Adrenal gland (tissue), 19 donors: ENCODE measurements at regions of chr18 and their contacts with region 1.

Region 1: GRCh38 chr18:9614401-9615279 is at the start of gene PPP4R1:
- DNase-seq: peak; percentile 74 to 85 (median 81)
- H3K4me3 ChIP-seq: peak within 1 kb of the TSS; percentile 46 to 95 (median 82)
- H3K27ac ChIP-seq: peak within 1 kb of the TSS; percentile 88 to 97 (median 94)
- H3K4me1 ChIP-seq: peaks cover 11 to 31% of the 10 kb centered on the region in 2 donors
- H3K27me3 ChIP-seq: no peaks in the 10 kb centered on the region
- CTCF ChIP-seq: peak in 1 of 6 experiments; percentile 11
- POLR2A ChIP-seq: peak in 1 of 2 donors; percentile 54
- total RNA-seq, gene PPP4R1: 22.8 to 104 (median 62.2) TPM

Region 2: DNA sequence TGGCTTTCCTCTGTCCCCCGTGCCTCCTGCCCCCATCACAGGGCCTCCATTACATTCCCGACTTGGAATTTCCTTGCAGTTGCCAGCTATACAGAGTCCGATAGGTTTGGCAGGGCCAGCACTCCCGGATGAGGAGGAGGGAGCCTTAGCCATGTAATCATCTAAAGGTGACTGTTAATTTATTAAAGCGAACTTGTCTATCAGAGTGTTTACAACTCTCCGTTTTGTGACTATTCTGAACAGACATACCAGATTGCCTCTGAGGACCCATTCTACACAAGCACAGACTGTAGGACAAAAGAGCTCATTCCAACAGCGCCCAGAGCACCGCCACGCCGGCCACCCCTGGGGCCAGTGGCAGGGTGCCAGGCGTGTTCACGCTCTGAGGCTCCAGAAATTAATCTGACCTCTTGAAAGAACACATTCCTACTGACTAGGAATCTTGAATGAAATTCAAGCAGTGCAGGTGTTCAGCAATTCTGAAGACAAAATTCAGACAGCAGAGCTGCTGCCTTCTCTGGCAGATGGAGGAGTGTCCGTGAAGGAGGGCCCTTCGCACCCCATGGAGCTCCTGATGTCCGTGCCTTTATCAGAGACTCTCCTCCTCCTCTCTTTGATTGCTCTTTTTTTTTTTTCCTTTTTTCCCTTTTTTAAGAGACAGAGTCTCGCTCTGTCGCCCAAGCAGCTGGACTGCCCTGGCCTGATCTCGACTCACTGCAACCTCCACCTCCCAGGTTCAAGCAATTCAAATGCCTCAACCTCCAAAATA is 197.4 kb before region 1 on chr18:
- intact Hi-C with region 1: no loop called
- DNase-seq: no peak
- H3K4me3 ChIP-seq: peak overlapping the region in 1 of 4 donors; percentile 26
- H3K27ac ChIP-seq: peak overlapping the region in 1 of 5 donors; percentile 10
- H3K4me1 ChIP-seq: no peaks in the 10 kb centered on the region
- H3K27me3 ChIP-seq: no peaks in the 10 kb centered on the region
- CTCF ChIP-seq: no peak
- POLR2A ChIP-seq: no peak

Region 3: GRCh38 chr18:9708057-9708433 is 93.4 kb after region 1 on chr18 and contains the start of gene RAB31:
- intact Hi-C with region 1: no loop called
- DNase-seq: peak; percentile 82 to 90 (median 87)
- H3K4me3 ChIP-seq: peak within 1 kb of the TSS; percentile 38 to 94 (median 84)
- H3K27ac ChIP-seq: peak within 1 kb of the TSS; percentile 62 to 98 (median 98)
- H3K4me1 ChIP-seq: peaks cover 30 to 56% of the 10 kb centered on the region in 2 donors
- H3K27me3 ChIP-seq: no peaks in the 10 kb centered on the region
- CTCF ChIP-seq: no peak
- POLR2A ChIP-seq: peak; percentile 87 to 93
- total RNA-seq, gene RAB31: 79.2 to 365 (median 143) TPM

Region 4: DNA sequence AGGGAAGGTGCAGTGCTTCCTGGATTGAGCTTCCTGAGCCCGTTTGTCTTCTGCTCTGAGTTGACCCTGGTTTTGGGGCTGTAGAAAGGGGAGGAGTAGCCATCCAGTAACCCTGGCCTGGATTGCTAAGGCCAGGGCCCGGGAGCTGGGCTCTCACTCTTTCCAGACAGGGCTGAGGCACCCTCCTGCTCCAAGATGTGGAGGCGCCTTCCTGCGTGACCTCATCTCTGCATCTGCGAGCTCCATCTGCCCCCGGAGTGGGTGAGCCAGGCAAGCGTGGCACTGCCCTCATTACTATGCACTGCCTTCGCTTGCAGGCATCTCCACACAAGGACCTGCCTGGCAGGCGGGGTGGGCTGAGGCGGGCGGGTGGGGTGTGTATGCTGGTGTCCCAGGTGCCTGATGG is 151.4 kb after region 1 on chr18:
- intact Hi-C with region 1: loop called in 1 of 2 experiments (anchors 10 kb)
- DNase-seq: peak in 5 of 7 donors; percentile 56 to 73 (median 66)
- H3K4me3 ChIP-seq: no peak overlapping the region
- H3K27ac ChIP-seq: peak overlapping the region in 4 of 5 donors; percentile 26 to 77 (median 64)
- H3K4me1 ChIP-seq: peaks cover 22 to 47% of the 10 kb centered on the region in 2 donors
- H3K27me3 ChIP-seq: no peaks in the 10 kb centered on the region
- CTCF ChIP-seq: no peak
- POLR2A ChIP-seq: no peak